ENCODE measurements at regions of chr13 and their contacts with region 1.

Region 1: GRCh38 chr13:73803997-73804396 is 330.2 kb downstream of the KLF12 start:
- DNase-seq: peak; percentile 55
- H3K4me3 ChIP-seq: no peak overlapping the region
- H3K27ac ChIP-seq: peak overlapping the region; percentile 91
- H3K4me1 ChIP-seq: peaks cover 58% of the 10 kb centered on the region
- H3K27me3 ChIP-seq: no peaks in the 10 kb centered on the region
- CTCF ChIP-seq: no peak

Region 2: GRCh38 chr13:74423434-74423833 is 619.4 kb after region 1 on chr13:
- CTCF ChIA-PET with region 1: no interaction called
- POLR2A ChIA-PET with region 1: no interaction called
- intact Hi-C with region 1: loop called (anchors 5 kb)
- DNase-seq: peak; percentile 14
- H3K4me3 ChIP-seq: no peak overlapping the region
- H3K27ac ChIP-seq: no peak overlapping the region
- H3K4me1 ChIP-seq: no peaks in the 10 kb centered on the region
- H3K27me3 ChIP-seq: no peaks in the 10 kb centered on the region
- CTCF ChIP-seq: no peak

Measured in A673 (cell line).